ENCODE measurements at regions of chr17 and their contacts with region 1.

Region 1: GRCh38 chr17:28967221-28968140 is 16.2 kb upstream of the PHF12 start:
- DNase-seq: no peak
- ATAC-seq: no peak
- H3K4me3 ChIP-seq: no peak overlapping the region
- H3K27ac ChIP-seq: no peak overlapping the region
- H3K4me1 ChIP-seq: peaks cover 3 to 15% of the 10 kb centered on the region in 2 experiments; a peak in 3 of 4 replicates
- H3K27me3 ChIP-seq: no peaks in the 10 kb centered on the region
- CTCF ChIP-seq: no peak
- POLR2A ChIP-seq: no peak
- RAD21 ChIP-seq: no peak

Region 2: DNA sequence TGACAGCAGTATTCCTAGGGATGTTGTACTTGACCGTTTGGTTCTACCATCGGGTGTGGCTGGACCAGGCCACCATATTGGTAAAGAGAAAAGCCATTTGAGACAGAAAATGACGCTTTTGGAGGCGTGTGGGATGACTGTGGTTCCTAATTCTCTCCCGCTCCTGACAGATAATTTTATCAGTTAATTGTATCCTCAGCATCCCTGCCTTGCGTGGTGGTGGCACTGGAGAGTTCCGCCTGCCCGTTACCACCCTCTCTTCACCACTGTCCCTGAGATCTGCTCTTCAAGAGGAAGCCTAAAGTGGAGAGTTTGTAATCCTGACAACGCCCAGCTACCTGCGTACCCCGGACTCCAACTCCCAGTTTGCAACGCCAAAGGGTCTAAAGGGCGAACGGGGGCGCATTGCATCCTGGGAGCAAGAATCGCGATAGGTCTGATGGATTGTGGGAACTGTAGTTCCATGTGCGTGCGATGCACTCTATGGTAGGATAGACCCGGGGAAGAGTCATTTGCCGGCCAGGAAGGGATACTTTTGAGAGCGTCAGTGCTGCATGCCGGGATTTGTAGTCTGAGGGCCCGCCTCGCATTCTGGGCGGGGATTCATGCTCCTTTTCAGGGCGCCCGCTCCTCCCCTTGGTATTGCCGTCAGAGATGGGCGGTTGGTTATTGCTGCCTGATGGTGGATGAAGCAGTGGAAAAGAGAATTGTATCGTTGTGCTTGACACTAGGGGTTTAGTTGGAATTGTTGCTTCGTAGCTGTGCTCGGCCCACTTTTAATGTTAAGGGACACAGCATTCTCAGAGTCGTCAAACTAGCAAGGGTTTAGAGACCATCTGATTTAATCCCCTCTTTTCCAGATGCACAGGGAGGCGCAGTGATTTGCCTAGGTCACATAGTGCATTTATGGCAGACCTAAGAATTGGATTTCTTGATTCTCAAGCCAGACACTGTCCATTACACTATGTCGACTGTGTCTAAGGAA is 15.2 kb before region 1 on chr17:
- CTCF ChIA-PET with region 1: interaction called, 68 read pairs
- POLR2A ChIA-PET with region 1: interaction called, 5 read pairs
- RAD21 ChIA-PET with region 1: interaction called in 1 of 2 experiments, 3 read pairs
- intact Hi-C with region 1: no loop called
- DNase-seq: peak; percentile 99
- ATAC-seq: peak; percentile 79
- H3K4me3 ChIP-seq: peak overlapping the region; percentile 69 to 81
- H3K27ac ChIP-seq: peak overlapping the region; percentile 93
- H3K4me1 ChIP-seq: peaks cover 16 to 28% of the 10 kb centered on the region in 2 experiments
- H3K27me3 ChIP-seq: no peaks in the 10 kb centered on the region
- CTCF ChIP-seq: no peak
- POLR2A ChIP-seq: peak; percentile 57
- RAD21 ChIP-seq: no peak

Region 3: DNA sequence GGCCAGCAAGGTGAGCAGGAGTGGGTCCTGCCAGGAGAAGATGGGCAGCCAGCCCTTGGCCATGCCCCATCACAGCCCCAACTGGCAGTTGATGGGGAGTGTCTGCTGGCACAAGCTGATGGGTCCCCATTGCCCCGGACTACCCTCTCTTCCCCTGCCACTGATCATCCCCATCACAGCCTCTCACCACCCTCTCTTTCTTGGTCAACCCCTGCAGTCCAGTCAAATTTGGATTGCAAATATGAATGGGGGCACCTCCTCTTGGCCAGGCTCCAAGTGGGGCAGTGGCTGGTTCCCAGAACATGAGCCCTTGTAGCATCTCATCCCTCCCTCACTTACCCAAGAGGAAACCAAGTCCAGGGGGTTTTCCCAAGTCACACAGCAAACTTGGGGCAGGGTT is 21.0 kb after region 1 on chr17:
- CTCF ChIA-PET with region 1: no interaction called
- POLR2A ChIA-PET with region 1: no interaction called
- RAD21 ChIA-PET with region 1: no interaction called
- intact Hi-C with region 1: no loop called
- DNase-seq: no peak
- ATAC-seq: no peak
- H3K4me3 ChIP-seq: no peak overlapping the region
- H3K27ac ChIP-seq: no peak overlapping the region
- H3K4me1 ChIP-seq: no peaks in the 10 kb centered on the region
- H3K27me3 ChIP-seq: peaks cover 4% of the 10 kb centered on the region; the same call in 1 of the 2 replicates
- CTCF ChIP-seq: no peak
- POLR2A ChIP-seq: no peak
- RAD21 ChIP-seq: no peak

Region 4: DNA sequence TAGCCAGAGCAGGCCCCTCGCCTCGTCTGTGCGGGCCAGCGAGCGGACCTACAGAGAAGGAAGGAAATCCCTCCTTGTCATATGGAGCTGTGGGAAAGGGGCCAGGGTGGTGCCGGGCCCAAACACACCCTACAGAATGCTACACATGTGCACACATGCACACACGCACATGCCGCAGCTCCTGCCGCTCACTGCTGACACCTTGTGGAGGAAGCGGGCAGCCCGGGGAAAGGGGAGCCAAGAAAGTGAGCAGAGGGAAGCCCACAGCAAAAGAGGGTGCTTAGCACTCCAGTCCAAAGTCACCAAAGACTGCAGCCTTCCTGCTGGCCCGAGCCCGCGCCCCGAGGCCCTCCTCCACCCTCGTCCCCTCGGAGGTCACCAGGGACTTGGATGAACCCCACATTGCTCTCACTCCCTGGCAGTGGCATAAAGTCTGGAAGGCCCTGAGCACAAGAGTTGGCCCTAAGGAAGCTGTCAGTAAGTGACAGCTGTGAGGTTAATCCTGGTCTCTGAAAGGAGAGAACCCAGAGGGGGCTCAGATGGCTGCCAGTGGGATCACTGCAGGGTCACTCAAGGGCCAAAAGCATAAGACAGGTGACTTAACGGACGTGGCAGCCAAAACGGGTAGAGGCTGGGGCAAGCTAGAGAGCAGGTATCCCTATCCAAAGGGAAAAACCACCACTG is 144.5 kb after region 1 on chr17:
- CTCF ChIA-PET with region 1: interaction called, 225 read pairs
- POLR2A ChIA-PET with region 1: interaction called, 10 read pairs
- RAD21 ChIA-PET with region 1: interaction called, 19 to 25 read pairs
- intact Hi-C with region 1: loop called (anchors 1 kb)
- DNase-seq: no peak
- ATAC-seq: peak; percentile 77
- H3K4me3 ChIP-seq: no peak overlapping the region
- H3K27ac ChIP-seq: 0 out of 2 replicates have a peak overlapping the region, but pooled peaks have one; percentile 12
- H3K4me1 ChIP-seq: peaks cover 15 to 28% of the 10 kb centered on the region in 2 experiments
- H3K27me3 ChIP-seq: no peaks in the 10 kb centered on the region
- CTCF ChIP-seq: peak; percentile 79 to 97 (median 95)
- POLR2A ChIP-seq: no peak
- RAD21 ChIP-seq: peak; percentile 75

Region 5: DNA sequence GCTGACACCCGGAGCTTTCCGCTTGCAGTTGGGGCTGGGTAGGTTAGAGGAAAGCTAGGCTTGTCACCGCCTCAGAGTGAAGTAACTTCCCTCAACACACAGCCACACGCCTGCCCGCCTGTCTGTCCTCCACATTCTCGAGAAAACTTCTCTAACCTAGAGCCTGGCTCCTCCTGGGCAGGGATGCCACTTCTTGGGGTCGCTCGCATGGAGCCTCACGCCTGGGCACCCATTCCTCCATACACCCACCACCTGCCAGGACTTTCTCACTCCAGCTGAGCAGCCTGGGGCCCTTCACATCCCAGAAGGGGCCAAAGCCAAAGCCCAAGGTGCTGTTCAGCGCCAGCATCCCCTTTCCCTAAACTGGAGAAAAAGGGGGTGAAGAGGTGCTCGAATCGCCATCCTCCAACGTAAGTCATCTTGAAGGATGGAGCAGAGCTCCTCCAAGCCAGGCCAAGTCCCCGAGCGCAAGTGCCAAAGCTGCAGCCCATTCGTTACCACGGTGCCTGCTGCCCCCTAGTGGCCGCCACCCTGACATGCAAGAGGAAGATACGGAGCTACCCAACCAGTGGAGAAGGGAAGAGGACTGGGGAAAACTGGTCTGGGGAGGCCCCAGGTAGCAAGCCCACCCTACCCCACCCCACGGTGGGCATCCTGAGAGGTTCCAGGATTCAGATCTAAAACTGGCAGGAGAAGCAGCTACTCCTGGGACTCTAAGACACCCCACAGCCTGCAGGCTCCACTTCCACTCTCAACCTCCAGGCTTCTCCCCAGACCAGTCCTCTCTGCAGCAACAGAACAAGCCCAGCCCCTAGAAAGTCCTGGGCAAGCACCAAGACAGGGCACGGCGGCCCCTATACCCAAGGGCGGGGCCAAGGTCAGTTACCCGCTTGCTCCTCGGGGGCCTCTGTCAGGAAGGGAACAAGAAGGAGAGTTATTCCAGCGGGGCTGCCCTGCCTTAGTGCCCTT is 149.6 kb after region 1 on chr17:
- CTCF ChIA-PET with region 1: interaction called, 225 read pairs
- POLR2A ChIA-PET with region 1: interaction called, 10 read pairs
- RAD21 ChIA-PET with region 1: interaction called, 19 to 25 read pairs
- intact Hi-C with region 1: loop called (anchors 1 kb)
- DNase-seq: no peak
- ATAC-seq: peak; percentile 77
- H3K4me3 ChIP-seq: no peak overlapping the region
- H3K27ac ChIP-seq: no peak overlapping the region
- H3K4me1 ChIP-seq: 0 out of 4 replicates have a peak, but pooled peaks cover 0 to 3% of the 10 kb centered on the region in 2 experiments
- H3K27me3 ChIP-seq: no peaks in the 10 kb centered on the region
- CTCF ChIP-seq: peak; percentile 65 to 94 (median 90); a peak in 5 of 6 replicates
- POLR2A ChIP-seq: no peak
- RAD21 ChIP-seq: peak; percentile 77

Region 6: DNA sequence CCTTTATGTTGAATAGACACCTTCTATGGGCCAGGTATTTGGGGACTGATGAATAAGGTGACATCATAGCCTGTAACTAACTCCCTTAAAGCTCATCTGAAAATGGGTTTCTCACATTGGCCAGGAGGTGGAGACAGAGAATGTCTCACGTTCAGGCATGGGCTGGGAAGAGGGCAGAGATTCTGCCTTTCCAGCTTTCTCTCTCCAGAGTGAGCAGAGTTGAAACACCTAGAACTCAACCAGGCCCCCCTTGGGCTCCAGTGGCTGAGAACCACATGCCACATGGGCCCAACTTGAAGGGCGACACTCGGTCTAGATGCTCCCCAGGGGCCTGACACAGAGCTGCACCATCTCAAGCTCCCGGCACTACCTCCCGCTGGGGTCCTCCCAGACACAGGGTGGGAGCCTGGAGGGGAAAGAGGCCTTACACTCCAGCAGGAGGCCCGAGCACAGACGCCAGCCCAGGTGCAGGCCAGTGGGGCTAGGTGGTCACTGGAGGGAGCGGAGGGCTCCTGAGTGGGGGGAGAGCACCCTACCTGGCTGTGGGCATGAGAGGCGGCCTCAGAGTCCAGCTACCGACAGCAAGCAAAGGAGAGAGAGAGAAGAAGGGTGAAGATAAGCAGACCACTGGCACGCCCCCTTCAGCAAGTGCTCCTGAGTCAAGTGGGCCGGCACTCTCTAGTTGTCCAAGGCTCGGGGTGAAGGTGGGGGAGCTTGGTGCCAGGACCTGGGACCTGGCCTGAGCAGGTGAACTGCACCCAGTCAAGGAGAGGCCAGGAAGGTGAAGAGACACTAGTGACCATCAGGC is 156.8 kb after region 1 on chr17:
- CTCF ChIA-PET with region 1: interaction called, 21 read pairs
- POLR2A ChIA-PET with region 1: interaction called, 3 read pairs
- RAD21 ChIA-PET with region 1: interaction called in 1 of 2 experiments, 3 read pairs
- intact Hi-C with region 1: no loop called
- DNase-seq: no peak
- ATAC-seq: peak; percentile 91
- H3K4me3 ChIP-seq: no peak overlapping the region
- H3K27ac ChIP-seq: no peak overlapping the region; the same call in 1 of the 2 replicates
- H3K4me1 ChIP-seq: peaks cover 14 to 21% of the 10 kb centered on the region in 2 experiments; a peak in 3 of 4 replicates
- H3K27me3 ChIP-seq: no peaks in the 10 kb centered on the region
- CTCF ChIP-seq: peak; percentile 66 to 92 (median 78)
- POLR2A ChIP-seq: no peak
- RAD21 ChIP-seq: peak; percentile 95

Measured in HCT116 (cell line).